H1 (cell line): ENCODE measurements at regions of chr5 and their contacts with region 1.

Region 1: DNA sequence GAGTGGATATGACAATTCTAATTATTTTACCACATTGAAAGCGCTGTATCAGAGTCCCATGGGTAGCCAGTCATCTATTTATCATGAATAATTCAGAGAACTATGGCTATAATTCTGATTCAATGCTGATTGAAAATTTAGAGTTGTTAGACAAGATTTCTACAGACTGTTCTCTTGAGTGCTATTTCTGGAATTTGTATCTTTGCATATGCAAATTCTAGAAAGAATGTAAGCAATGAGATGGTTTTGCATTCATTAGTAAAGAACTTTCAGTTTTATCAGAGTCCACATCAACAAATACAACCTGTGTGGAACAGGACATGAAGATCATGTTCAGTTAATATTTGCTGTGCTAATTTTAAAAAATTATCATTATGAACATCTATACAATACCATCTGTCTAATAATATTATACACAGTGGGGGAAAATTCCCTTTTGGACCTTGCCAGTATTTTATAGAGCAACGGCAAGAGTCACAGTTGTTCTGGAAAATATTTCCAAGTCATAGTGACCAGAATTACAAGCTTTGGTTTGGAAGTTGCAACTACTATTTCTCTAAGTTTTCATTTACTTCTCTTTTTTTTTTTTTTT is 372.8 kb upstream of the PTGER4 start:
- DNase-seq: no peak
- H3K4me3 ChIP-seq: no peak overlapping the region
- H3K27ac ChIP-seq: no peak overlapping the region
- H3K4me1 ChIP-seq: no peaks in the 10 kb centered on the region; a peak in 2 of 7 replicates
- H3K27me3 ChIP-seq: no peaks in the 10 kb centered on the region
- CTCF ChIP-seq: no peak
- EP300 ChIP-seq: no peak
- POLR2A ChIP-seq: no peak
- RAD21 ChIP-seq: no peak

Region 2: DNA sequence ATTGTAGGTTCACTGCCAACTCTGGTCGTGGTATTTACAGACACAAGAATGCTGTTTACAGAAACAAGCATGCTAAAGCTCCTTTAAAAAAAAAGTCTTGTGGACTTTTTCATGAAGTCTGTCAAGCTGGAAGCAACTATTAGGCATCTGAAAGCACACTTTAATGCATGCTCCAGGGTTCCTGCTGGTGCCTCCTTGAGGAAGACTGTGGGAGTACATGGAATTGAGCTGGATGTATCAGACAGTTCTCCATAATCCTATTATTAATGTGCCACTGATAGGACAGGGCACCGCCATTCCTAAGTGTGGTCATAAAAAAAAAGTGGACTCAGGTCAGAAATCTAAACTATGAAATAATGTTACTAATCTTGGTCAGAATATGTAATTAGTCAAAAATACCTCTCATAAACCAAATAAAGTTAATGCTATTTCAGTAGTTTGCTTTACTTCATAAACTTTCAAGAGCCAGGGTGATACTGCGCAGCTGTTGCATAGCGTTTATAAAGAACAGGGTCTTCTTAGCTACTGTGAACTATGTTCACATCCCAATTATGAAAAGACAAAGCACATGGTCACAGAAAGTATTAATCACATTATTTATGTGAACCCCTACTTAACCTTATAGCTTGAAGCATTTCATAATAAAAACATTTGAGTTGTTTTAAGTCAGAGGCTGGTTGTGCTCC is 18.0 kb before region 1 on chr5:
- CTCF ChIA-PET with region 1: interaction called, 10 read pairs
- POLR2A ChIA-PET with region 1: no interaction called
- DNase-seq: no peak
- H3K4me3 ChIP-seq: no peak overlapping the region
- H3K27ac ChIP-seq: no peak overlapping the region
- H3K4me1 ChIP-seq: no peaks in the 10 kb centered on the region
- H3K27me3 ChIP-seq: no peaks in the 10 kb centered on the region
- CTCF ChIP-seq: peak in 1 of 3 experiments; percentile 40; a peak in 2 of 4 replicates
- EP300 ChIP-seq: no peak
- POLR2A ChIP-seq: no peak
- RAD21 ChIP-seq: peak; percentile 34 to 38; a peak in 3 of 4 replicates

Region 3: GRCh38 chr5:40356248-40356647 is 49.3 kb after region 1 on chr5:
- CTCF ChIA-PET with region 1: no interaction called
- POLR2A ChIA-PET with region 1: no interaction called
- DNase-seq: no peak
- H3K4me3 ChIP-seq: no peak overlapping the region
- H3K27ac ChIP-seq: no peak overlapping the region
- H3K4me1 ChIP-seq: no peaks in the 10 kb centered on the region
- H3K27me3 ChIP-seq: no peaks in the 10 kb centered on the region
- CTCF ChIP-seq: no peak
- EP300 ChIP-seq: no peak
- POLR2A ChIP-seq: no peak
- RAD21 ChIP-seq: no peak